ENCODE measurements at regions of chr7 and their contacts with region 1.

Region 1: GRCh38 chr7:28479507-28479947 is 67.2 kb downstream of the CREB5 start:
- DNase-seq: peak; percentile 49
- CTCF ChIP-seq: no peak

Region 2: DNA sequence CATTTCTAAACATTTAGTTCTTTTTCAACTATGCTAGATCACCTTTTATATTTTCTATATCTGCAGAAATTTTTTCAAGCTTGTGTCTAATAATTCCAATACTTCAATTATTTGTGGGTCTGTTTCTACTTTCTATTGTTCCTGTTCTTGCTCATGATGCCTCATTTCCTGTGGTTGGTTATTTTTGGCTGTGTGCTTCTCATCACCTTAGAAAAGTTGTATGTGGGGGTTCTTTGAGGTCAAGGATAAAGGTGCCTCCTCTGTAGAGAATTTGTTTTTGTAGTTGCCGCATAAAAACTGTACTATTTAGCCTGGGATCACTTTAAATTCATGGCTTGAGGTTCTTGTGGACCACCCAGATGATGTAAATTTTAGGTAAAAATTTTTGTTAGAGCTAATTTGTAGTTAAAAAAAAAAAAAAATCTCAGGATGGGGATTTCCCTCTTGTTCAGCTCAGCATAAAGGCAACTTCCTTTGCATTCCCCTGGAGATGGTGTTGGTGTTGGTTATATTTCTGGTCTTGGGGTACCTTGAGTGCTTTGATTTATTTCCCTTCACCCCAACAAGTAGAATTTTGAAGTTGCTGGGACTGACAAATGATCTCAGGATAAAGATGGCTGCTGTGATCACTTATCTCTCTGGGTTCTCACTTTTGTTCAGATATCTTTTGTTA is 271.9 kb before region 1 on chr7:
- CTCF ChIA-PET with region 1: no interaction called
- POLR2A ChIA-PET with region 1: no interaction called
- DNase-seq: peak; percentile 15
- CTCF ChIP-seq: no peak

Region 3: GRCh38 chr7:28410628-28411531 is 68.6 kb before region 1 on chr7:
- CTCF ChIA-PET with region 1: interaction called, 10 read pairs
- POLR2A ChIA-PET with region 1: interaction called, 5 read pairs
- DNase-seq: peak; percentile 26
- CTCF ChIP-seq: no peak

Region 4: GRCh38 chr7:28466885-28467284 is 12.6 kb before region 1 on chr7:
- CTCF ChIA-PET with region 1: interaction called, 11 read pairs
- POLR2A ChIA-PET with region 1: no interaction called
- DNase-seq: no peak
- CTCF ChIP-seq: no peak

Region 5: GRCh38 chr7:28530175-28530802 is 50.8 kb after region 1 on chr7:
- CTCF ChIA-PET with region 1: interaction called, 11 read pairs
- POLR2A ChIA-PET with region 1: no interaction called
- DNase-seq: no peak
- CTCF ChIP-seq: no peak

Region 6: GRCh38 chr7:28808796-28809527 is 329.4 kb after region 1 on chr7:
- CTCF ChIA-PET with region 1: no interaction called
- POLR2A ChIA-PET with region 1: no interaction called
- DNase-seq: no peak
- CTCF ChIP-seq: no peak